ENCODE measurements at regions of chr11 and their contacts with region 1.

Region 1: GRCh38 chr11:122309262-122309925 is 193.4 kb upstream of the BLID start:
- DNase-seq: no peak
- ATAC-seq: peak; percentile 83

Region 2: GRCh38 chr11:122126024-122126688 is 183.2 kb before region 1 on chr11:
- intact Hi-C with region 1: no loop called
- DNase-seq: no peak
- ATAC-seq: no peak

Region 3: DNA sequence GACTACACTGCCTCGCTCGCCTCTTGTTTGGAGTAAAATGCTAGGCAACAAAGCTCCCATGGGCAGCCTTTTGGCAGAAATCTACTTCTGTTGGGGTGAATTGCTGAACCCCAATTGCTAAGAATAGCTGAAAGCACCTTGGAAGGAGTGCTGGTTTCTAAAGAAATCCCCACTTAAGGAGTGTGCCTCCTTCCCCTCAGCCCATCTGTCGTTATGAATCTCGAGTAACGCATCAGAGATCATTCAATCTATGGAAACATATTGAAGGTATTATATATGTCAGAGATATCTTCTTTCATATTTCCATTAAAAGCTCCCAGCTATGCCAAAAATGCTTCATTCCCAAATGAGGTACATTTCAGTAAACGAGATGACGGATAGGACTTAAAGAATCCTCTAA is 36.2 kb after region 1 on chr11:
- intact Hi-C with region 1: loop called (anchors 5 kb)
- DNase-seq: no peak
- ATAC-seq: no peak

Region 4: DNA sequence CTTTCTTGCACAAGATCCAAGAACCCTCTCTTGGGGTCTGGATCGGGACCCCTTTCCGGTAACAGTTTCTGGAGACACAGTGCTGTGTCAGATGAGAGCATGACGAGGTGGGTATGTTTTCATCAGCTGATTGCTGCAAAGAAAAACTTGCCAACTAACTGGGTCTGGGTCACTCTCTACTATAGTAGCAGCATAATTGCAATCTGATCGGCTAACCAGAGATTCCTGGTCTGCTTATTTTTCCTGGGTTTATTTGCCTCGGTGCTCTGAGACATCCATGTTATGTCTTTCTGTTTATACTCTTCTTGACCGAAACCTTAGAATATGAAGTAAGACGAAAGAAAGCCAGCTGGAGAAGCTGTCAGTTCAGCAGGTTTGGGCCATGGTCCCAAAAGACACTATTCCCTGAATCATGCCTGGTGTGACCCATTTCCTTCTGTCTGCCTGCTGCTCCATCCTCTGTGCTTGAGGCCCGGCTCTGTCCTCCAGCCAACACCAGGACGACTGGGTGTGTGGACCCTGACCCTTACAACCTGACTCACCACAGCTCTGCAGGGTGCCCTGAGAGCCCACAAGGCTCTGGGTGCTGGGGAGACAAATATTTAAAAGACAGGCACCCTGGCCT is 909.8 kb after region 1 on chr11:
- intact Hi-C with region 1: no loop called
- DNase-seq: no peak
- ATAC-seq: peak; percentile 50